Activated T-helper 1 cell treated with anti-CD3 and anti-CD28 coated beads, Interleukin-12 subunit alpha, Interleukin-12 subunit beta, Interleukin-2, Interleukin-4 antibody, amounts not matched to agents 30 ng/mL and 10 ng/mL and 1 ng/mL, durations not matched to agents 14 hours and 24 hours and 36 hours (primary cell): ENCODE measurements at regions of chr1 and their contacts with region 1.

Region 1: GRCh38 chr1:45490626-45491486 is at the start of gene TESK2:
- DNase-seq: peak; percentile 97
- H3K4me3 Mint-ChIP-seq: no peak within 1 kb of the TSS
- H3K27ac Mint-ChIP-seq: no peak within 1 kb of the TSS
- H3K4me1 Mint-ChIP-seq: peaks cover 5% of the 10 kb centered on the region
- H3K27me3 Mint-ChIP-seq: no peaks in the 10 kb centered on the region
- total RNA-seq, gene TESK2: 1.4 and 1.6 TPM in 2 replicates

Region 2: GRCh38 chr1:44721485-44722361 is 769.1 kb before region 1 on chr1:
- intact Hi-C with region 1: loop called (anchors 5 kb)
- DNase-seq: peak; percentile 75
- H3K4me3 Mint-ChIP-seq: peak overlapping the region; percentile 77
- H3K27ac Mint-ChIP-seq: peak overlapping the region; percentile 97
- H3K4me1 Mint-ChIP-seq: peaks cover 71% of the 10 kb centered on the region
- H3K27me3 Mint-ChIP-seq: no peaks in the 10 kb centered on the region

Region 3: DNA sequence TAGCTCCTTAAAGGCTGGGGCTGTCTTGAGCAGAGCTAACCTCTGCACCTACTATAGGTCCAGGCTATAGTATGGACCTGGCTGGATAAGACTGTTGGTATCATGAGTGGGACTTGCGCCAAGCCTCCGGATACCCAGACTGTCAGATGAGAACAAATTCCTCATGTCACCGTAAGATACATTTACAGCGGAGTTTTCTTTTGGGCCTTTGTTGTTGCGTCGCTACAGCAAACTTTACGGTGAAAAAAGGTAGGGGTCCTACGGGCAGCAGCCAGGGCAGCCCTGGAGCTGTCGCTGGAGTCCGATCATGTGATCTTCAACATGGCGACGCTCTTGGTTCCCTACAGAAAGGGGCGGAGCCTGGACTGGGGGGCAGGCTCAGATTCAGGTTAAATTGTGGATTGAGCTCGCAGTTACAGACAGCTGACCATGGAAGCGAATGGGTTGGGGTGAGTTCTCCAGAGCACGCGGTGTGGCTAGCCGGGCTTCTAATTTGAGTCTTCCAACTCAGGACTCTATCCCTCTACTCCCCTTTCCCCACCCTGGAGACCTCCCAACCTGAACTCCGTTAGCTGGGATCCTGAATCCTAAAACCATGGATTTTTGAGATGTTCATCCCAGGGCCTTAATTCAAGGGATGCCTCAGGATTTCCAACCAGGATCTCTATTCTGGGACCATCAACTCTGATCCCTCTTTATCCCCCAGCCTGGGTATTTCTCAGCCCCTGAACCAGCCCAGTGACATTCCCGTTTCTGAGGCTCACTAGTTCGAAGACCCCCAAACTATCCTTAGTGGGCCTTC is 478.8 kb before region 1 on chr1 and contains the start of gene UROD:
- intact Hi-C with region 1: loop called (anchors 1 kb)
- DNase-seq: peak; percentile 86
- H3K4me3 Mint-ChIP-seq: peak within 1 kb of the TSS; percentile 84
- H3K27ac Mint-ChIP-seq: peak within 1 kb of the TSS; percentile 90
- H3K4me1 Mint-ChIP-seq: peaks cover 58% of the 10 kb centered on the region
- H3K27me3 Mint-ChIP-seq: no peaks in the 10 kb centered on the region
- total RNA-seq, gene UROD: 79.9 and 81.9 TPM in 2 replicates

Region 4: DNA sequence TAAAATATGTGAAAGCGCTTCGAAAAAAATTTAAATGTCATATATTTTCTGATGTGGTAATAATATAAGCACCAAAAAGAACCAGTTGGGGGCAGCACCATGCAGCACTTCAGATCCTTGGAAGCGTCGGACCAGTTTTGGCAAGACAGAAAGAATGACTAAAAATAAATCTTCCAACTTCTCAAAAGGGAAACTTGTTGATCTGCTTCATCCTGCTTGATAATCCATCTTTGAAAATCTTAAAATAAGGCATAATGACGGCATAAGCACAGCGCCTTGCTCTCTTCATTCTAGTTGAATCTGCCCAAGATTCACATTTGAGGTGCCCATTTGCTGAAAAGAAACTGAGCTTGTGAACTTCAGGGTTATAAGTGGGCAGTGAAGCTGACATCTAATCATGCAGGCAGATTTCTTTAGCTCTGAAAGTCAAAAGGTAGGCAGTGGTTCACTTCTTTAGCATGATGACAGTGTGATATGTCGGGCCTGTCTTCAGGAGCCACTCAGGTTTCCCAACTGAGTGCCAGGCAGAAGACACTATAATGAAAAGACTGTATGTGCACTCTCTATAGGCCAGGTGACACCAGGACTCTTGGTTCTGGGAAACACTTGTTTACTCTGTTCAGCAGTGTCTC is 130.9 kb before region 1 on chr1:
- intact Hi-C with region 1: loop called (anchors 1 kb)
- DNase-seq: peak; percentile 5
- H3K4me3 Mint-ChIP-seq: no peak overlapping the region
- H3K27ac Mint-ChIP-seq: no peak overlapping the region
- H3K4me1 Mint-ChIP-seq: peaks cover 5% of the 10 kb centered on the region
- H3K27me3 Mint-ChIP-seq: peaks cover 2% of the 10 kb centered on the region

Region 5: DNA sequence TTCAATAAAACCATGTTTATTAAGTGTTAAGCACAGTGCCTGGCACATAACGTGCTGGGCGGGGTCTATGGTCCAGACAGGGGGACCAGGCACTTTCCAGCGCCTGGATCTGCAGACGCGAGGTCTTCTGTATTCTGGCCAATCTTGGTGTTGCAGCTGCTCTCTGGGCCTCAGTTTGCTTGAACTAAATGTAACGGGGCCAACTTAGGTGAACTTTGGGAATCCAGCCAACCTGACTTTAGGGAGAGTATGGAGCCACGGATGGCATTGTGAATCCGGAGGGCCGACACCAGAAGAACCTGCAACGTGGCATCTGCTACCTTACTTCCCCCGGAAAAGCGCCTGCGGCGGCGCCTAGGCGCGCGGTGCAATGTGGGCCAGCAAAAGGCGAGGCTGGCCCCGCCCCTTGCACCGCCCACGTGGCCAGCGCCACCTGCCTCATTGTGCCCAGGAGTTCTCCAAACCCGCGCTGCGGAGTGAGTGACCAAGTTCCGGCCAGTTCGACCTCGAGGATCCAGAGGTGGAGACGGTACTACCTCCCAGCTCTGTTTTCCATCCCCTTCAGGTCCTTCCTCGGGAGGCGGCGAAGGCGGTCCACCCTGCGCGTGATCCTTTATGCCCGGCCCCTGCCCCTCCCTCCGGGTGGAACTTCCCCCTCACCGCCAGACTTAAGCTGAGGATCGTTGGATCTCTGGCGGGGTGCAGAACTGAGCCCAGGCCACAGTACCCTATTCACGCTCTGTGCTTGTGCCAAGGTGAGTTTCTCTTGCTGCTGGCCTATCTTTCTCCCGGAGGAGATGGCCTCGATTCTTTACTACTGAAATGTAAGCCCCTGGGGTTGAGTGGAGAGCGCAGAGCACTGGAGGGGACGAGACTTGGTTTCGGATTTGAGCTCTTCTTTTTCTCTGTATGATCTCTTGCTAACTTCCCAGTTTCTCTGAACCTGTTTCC is 59.8 kb after region 1 on chr1 and contains the start of gene AKR1A1:
- intact Hi-C with region 1: loop called (anchors 1 kb)
- DNase-seq: peak; percentile 85
- H3K4me3 Mint-ChIP-seq: peak within 1 kb of the TSS; percentile 93
- H3K27ac Mint-ChIP-seq: peak within 1 kb of the TSS; percentile 92
- H3K4me1 Mint-ChIP-seq: peaks cover 29% of the 10 kb centered on the region
- H3K27me3 Mint-ChIP-seq: peaks cover 5% of the 10 kb centered on the region
- total RNA-seq, gene AKR1A1: 192 and 194 TPM in 2 replicates

Region 6: DNA sequence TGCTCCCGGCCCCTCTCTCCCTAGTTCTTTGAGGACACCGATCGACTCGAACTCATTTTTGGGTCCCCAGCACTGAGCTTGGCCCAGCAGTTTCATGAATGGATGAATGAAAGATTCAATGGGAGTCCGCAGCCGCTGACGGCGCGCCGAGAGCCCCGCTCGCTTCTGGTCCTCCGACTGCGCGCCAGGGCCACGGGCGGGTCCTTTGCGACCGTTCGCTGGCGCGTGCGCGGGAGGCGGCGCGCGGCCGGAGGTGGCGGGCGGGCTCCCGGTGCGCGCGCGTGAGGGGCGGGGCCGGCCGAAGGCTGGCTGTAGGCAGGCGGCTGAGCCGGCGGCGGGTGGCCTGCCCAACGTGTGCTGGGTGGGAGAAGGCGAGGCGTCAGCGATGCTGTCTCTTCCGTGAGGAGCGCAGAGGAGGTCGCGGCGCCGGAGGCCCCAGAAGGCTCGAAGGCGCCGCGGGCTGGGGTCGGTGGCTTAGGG is 312.5 kb after region 1 on chr1 and contains the start of gene MAST2:
- intact Hi-C with region 1: loop called (anchors 5 kb)
- DNase-seq: peak; percentile 87
- H3K4me3 Mint-ChIP-seq: peak within 1 kb of the TSS; percentile 99
- H3K27ac Mint-ChIP-seq: peak within 1 kb of the TSS; percentile 93
- H3K4me1 Mint-ChIP-seq: peaks cover 32% of the 10 kb centered on the region
- H3K27me3 Mint-ChIP-seq: no peaks in the 10 kb centered on the region
- total RNA-seq, gene MAST2: 32.0 and 37.2 TPM in 2 replicates